Activated B cell treated with CpG ODN at 0.5 μM for 24 hours (primary cell): ENCODE measurements at regions of chr2 and their contacts with region 1.

Region 1: GRCh38 chr2:190180313-190181122 is 118.0 kb upstream of the MSTN start:
- DNase-seq: peak; percentile 54
- ATAC-seq: peak; percentile 86
- H3K4me3 Mint-ChIP-seq: peak overlapping the region; percentile 82
- H3K27ac Mint-ChIP-seq: no peak overlapping the region
- H3K4me1 Mint-ChIP-seq: peaks cover 20% of the 10 kb centered on the region
- H3K27me3 Mint-ChIP-seq: no peaks in the 10 kb centered on the region
- CTCF ChIP-seq: no peak

Region 2: DNA sequence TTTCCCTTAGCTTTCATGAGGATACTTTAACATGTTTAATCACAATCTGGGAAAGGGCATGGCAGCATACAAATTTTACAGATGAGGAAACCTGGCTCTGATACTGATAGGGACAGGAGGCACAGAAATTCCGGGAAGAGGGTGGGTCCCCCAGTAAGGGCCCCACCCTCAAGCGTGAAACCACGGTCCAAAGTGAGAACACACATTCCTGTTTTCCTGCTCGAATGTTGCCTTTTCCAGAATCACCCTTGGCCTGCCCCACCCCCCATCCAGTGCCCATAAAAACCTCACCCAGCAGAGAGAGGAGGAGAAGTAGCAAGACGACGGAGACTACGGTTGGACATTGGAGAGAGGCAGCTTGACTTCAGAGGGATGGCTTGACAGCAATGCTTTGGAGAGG is 40.9 kb after region 1 on chr2:
- CTCF ChIA-PET with region 1: no interaction called
- POLR2A ChIA-PET with region 1: no interaction called
- intact Hi-C with region 1: loop called (anchors 5 kb)
- DNase-seq: no peak
- ATAC-seq: no peak
- H3K4me3 Mint-ChIP-seq: no peak overlapping the region
- H3K27ac Mint-ChIP-seq: no peak overlapping the region
- H3K4me1 Mint-ChIP-seq: peaks cover 8% of the 10 kb centered on the region
- H3K27me3 Mint-ChIP-seq: no peaks in the 10 kb centered on the region
- CTCF ChIP-seq: no peak

Region 3: DNA sequence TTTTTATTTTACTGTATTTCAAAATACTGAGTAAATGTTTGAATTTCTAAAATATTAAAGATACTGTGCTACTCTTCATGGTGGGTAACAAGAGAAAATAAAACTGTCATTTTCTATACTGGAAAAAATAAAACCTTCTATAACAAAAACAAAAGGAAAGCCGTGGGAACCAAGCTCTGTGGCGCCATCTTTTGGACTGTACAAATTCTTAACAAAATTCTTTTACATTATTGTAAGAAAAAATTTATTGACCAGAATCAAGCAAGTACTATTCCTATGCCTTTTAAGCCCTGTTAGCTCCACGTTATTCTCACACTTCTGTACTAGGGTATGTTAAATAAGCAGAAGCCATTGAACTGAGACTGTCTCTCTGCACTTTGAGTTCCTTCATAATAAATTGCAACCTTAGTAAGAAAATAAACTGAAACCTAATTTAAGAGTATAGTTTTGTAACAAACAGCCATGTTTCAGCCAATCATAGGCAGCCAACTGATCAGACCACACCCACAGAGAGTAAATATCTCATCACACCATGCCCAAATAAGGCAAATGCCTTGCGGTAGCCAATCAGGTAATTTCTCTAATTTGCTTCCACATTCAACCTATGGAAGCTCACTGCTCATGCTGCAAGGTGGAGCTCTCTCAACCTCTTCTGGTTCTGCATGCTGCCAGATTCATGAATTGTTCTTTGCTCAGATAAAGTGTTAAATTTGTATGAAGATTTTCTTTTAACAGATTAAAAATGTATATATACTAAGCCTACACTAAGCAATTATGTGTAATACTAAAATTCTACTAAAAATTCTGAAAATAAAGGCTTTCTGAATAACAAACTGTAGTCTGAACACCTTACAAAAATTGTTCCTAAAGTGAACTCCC is 97.0 kb after region 1 on chr2:
- CTCF ChIA-PET with region 1: no interaction called
- POLR2A ChIA-PET with region 1: interaction called, 3 read pairs
- intact Hi-C with region 1: loop called (anchors 5 kb)
- DNase-seq: no peak
- ATAC-seq: peak; percentile 31
- H3K4me3 Mint-ChIP-seq: no peak overlapping the region
- H3K27ac Mint-ChIP-seq: no peak overlapping the region
- H3K4me1 Mint-ChIP-seq: no peaks in the 10 kb centered on the region
- H3K27me3 Mint-ChIP-seq: no peaks in the 10 kb centered on the region
- CTCF ChIP-seq: no peak

Region 4: GRCh38 chr2:190369635-190370034 is 189.1 kb after region 1 on chr2:
- CTCF ChIA-PET with region 1: no interaction called
- POLR2A ChIA-PET with region 1: no interaction called
- intact Hi-C with region 1: loop called (anchors 5 kb)
- DNase-seq: no peak
- ATAC-seq: no peak
- H3K4me3 Mint-ChIP-seq: no peak overlapping the region
- H3K27ac Mint-ChIP-seq: no peak overlapping the region
- H3K4me1 Mint-ChIP-seq: no peaks in the 10 kb centered on the region
- H3K27me3 Mint-ChIP-seq: no peaks in the 10 kb centered on the region
- CTCF ChIP-seq: no peak